ENCODE measurements at regions of chr14 and their contacts with region 1.

Region 1: DNA sequence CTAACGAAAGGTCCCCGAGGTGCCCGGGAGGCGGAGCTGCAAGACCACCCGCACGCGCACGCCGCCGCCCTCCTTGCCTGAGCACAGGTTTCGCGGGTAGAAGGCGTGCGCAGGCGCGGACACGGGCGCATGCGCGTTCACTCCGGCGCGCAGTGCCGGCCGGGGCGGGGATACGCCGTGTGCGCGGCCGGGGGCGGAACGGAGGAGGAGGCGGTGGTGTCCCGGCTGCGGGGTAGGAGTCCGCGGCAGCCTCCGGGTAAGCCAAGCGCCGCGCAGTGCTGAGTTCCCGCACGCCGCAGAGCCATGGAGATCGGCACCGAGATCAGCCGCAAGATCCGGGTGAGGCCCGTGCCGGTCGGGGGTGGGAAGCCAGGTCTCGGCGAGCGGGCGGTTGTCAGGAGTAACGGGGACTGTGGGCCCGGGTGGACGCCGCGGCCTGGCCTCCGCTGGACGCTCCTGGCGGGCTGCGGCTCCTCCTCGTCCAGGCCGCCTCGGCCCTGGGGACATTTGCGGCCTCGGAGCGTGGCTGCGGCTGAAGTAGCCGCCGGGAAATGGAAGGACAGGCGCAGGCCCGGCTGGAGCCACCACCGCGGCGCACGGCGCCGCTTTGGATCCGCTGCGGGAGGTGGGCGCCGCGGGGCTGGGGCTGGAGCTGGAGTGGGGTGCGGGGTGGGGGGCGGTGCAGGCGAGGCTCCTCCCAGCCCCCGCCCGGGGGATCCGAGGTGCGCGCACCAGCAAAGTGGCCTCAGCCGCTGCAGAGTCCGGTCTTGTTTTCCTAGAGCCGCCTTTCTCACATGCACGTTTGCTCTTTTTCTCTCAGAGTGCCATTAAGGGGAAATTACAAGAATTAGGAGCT is at the start of gene ZC3H14:
- DNase-seq: peak; percentile 87
- ATAC-seq: peak; percentile 97
- H3K4me3 Mint-ChIP-seq: peak within 1 kb of the TSS; percentile 96
- H3K27ac Mint-ChIP-seq: peak within 1 kb of the TSS; percentile 86
- H3K4me1 Mint-ChIP-seq: peaks cover 18% of the 10 kb centered on the region
- H3K27me3 Mint-ChIP-seq: peaks cover 6% of the 10 kb centered on the region
- CTCF ChIP-seq: no peak
- total RNA-seq, gene ZC3H14: 38.7 and 45.0 TPM in 2 replicates

Region 2: DNA sequence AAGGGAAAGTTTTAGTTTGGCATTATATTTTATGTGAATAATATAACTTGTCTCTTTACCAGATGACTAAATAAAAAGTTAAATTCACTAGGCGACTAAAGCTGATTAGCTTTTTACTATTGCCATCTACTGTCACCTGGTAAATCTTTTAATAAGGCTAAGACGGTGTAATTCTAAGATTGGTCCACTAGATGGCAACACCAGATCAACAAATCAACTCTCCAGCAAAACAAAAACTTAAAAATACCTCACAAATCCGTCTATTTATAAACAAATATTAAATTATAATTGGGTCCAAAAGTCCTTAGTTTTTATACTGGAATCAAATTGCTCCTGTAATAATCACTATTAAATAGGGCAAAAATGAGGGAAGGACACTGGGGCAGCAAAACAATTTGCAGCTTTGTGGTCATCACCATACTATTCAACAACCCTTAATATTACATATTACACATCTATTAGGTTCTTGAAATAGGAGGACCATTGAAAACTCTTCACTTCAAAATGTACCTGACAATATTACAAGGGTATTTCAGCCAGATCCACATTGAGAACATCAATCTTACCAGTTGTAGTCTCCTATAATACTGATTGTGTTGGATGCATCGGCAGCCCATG is 618.0 kb before region 1 on chr14:
- CTCF ChIA-PET with region 1: no interaction called
- POLR2A ChIA-PET with region 1: no interaction called
- intact Hi-C with region 1: loop called (anchors 5 kb)
- DNase-seq: no peak
- ATAC-seq: no peak
- H3K4me3 Mint-ChIP-seq: no peak overlapping the region
- H3K27ac Mint-ChIP-seq: no peak overlapping the region
- H3K4me1 Mint-ChIP-seq: no peaks in the 10 kb centered on the region
- H3K27me3 Mint-ChIP-seq: no peaks in the 10 kb centered on the region
- CTCF ChIP-seq: no peak

Region 3: DNA sequence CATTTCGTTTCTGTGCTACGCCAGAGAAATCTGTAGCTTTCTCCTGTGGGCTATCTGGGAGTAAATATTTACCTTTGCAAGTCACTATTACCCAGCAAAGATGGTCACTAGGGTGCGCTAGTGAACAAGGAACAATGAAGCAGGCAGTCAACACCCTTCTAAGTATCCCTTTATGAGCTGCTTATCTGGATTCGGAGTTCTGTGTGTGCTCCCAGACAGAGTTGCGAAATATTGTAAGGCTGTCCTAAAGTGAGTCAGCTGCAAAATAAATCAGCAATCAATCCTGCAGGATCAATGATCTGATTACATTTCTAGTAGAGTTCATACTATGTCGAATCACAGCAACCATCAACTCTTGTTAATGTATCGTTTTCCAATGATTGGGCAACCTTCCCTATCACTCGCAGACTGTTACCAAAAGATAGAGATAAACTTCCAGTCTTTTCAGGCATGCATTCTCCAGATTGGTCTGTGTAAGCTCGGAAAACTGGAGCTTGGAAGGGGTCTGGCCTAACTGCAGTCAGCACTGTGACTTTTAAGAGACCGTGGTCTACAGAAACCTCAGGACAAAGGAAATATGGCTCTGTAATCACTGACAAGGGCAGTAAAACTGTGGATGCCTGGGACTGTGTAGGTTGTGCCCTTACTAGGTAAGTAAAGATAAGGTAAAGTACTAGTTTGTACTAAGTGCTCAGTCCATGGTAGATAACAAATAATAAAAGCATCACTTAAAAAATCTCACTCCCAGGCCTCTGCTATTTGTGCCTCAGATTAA is 373.5 kb before region 1 on chr14:
- CTCF ChIA-PET with region 1: no interaction called
- POLR2A ChIA-PET with region 1: no interaction called
- intact Hi-C with region 1: loop called (anchors 5 kb)
- DNase-seq: no peak
- ATAC-seq: peak; percentile 71
- H3K4me3 Mint-ChIP-seq: peak overlapping the region; percentile 56
- H3K27ac Mint-ChIP-seq: no peak overlapping the region
- H3K4me1 Mint-ChIP-seq: peaks cover 7% of the 10 kb centered on the region
- H3K27me3 Mint-ChIP-seq: peaks cover 8% of the 10 kb centered on the region
- CTCF ChIP-seq: no peak

Region 4: GRCh38 chr14:88385345-88386101 is 177.5 kb before region 1 on chr14 and contains the start of gene SPATA7:
- CTCF ChIA-PET with region 1: no interaction called
- POLR2A ChIA-PET with region 1: no interaction called
- intact Hi-C with region 1: loop called (anchors 5 kb)
- DNase-seq: peak; percentile 71
- ATAC-seq: peak; percentile 94
- H3K4me3 Mint-ChIP-seq: peak within 1 kb of the TSS; percentile 94
- H3K27ac Mint-ChIP-seq: peak within 1 kb of the TSS; percentile 68
- H3K4me1 Mint-ChIP-seq: peaks cover 15% of the 10 kb centered on the region
- H3K27me3 Mint-ChIP-seq: peaks cover 2% of the 10 kb centered on the region
- CTCF ChIP-seq: no peak
- total RNA-seq, gene SPATA7: 1.4 and 1.6 TPM in 2 replicates

Region 5: DNA sequence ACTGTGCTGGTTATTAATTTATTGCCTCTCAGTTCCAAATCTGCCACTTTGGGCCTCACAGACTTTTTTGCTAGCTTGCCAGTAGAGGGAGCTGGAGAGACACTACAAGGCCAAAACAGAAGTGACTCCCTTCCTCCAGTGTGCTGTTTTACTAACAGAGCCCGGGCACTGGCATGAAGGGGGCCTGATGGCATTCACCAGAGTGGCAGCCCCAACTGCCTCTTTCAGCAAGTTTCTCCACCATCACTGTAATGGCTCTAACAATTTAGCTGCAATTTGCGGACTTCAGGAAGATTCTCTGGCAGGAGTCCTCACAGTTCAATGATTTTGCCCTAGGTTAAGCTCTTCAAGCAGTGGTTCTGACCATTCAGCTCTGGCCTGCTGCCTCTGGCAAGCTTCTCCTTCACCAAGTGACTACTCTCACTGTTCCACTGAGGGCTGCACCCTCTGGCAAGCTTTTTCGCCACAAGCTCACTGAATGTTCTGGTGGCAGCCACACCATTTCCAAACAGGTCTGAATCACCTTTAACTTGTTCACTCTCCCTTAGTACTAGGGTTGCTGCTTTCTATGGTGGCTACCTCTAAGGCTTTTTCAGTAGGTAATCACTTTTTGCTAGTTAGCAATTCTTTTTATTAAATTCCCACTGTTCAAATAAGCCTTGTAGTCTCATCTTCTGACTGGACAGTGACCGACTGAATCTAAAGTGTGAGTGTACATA is 104.7 kb after region 1 on chr14:
- CTCF ChIA-PET with region 1: no interaction called
- POLR2A ChIA-PET with region 1: no interaction called
- intact Hi-C with region 1: loop called (anchors 5 kb)
- DNase-seq: peak; percentile 32
- ATAC-seq: peak; percentile 83
- H3K4me3 Mint-ChIP-seq: peak overlapping the region; percentile 64
- H3K27ac Mint-ChIP-seq: peak overlapping the region; percentile 72
- H3K4me1 Mint-ChIP-seq: peaks cover 20% of the 10 kb centered on the region
- H3K27me3 Mint-ChIP-seq: no peaks in the 10 kb centered on the region
- CTCF ChIP-seq: peak; percentile 62

Region 6: GRCh38 chr14:90256354-90257131 is 1693.5 kb after region 1 on chr14 and contains the start of gene PSMC1:
- CTCF ChIA-PET with region 1: no interaction called
- POLR2A ChIA-PET with region 1: no interaction called
- intact Hi-C with region 1: loop called (anchors 5 kb)
- DNase-seq: peak; percentile 76
- ATAC-seq: peak; percentile 94
- H3K4me3 Mint-ChIP-seq: peak within 1 kb of the TSS; percentile 98
- H3K27ac Mint-ChIP-seq: peak within 1 kb of the TSS; percentile 92
- H3K4me1 Mint-ChIP-seq: peaks cover 40% of the 10 kb centered on the region
- H3K27me3 Mint-ChIP-seq: no peaks in the 10 kb centered on the region
- CTCF ChIP-seq: no peak
- total RNA-seq, gene PSMC1: 101 and 102 TPM in 2 replicates

Region 7: GRCh38 chr14:90419200-90419599 is 1856.1 kb after region 1 on chr14:
- CTCF ChIA-PET with region 1: no interaction called
- POLR2A ChIA-PET with region 1: no interaction called
- intact Hi-C with region 1: no loop called
- DNase-seq: no peak
- ATAC-seq: no peak
- H3K4me3 Mint-ChIP-seq: no peak overlapping the region
- H3K27ac Mint-ChIP-seq: no peak overlapping the region
- H3K4me1 Mint-ChIP-seq: no peaks in the 10 kb centered on the region
- H3K27me3 Mint-ChIP-seq: no peaks in the 10 kb centered on the region
- CTCF ChIP-seq: no peak